Heart left ventricle (tissue), 16 donors: ENCODE measurements at regions of chr1 and their contacts with region 1.

Region 1: DNA sequence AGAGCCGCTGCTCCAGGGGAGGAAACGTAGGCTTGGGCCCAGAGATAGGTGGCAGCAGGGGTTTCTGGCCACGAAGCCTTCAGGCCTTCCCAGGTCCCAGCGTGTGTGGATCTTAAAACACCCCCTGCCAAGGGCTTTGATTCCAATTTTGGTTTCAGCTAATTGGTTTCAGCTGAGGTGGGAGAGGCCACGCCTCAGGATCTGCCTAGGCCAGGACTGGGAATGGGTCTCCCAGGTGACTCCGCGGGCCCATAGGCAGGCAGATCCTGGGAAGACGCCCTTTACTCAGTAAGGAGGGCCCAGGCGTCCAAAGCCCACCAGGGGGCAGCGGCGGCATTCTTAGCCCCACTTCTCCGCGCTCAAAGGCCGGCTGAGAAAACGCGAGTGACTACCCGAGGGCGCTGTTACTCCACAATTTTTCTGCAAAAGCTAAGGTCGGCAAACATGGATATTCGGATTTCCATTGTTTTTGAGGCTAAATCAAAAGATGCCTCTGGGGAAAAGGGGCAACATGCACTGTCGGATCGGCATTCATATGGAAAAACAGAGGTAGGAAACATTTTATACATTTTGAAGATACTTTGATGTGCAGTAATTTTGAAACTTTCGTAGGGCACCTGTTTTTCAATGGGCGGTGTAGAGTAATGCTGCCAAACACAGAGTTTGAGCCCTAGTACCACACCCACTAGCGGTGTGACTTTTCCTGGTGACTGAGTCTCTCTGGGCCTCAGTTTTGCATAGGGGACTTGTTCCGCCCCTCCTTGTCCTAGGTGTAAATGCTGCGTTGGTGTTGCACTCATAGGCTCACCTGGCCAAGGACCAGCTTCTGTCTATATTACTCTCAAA is 31.8 kb upstream of the BCL10 start:
- DNase-seq: peak; percentile 87 to 92 (median 88)
- ATAC-seq: peak; percentile 94 to 99 (median 97)
- H3K4me3 ChIP-seq: peak overlapping the region in 1 of 12 donors; percentile 3
- H3K27ac ChIP-seq: no peak overlapping the region
- H3K4me1 ChIP-seq: peaks cover 0 to 13% (median 7%) of the 10 kb centered on the region in 12 donors
- H3K27me3 ChIP-seq: peaks cover 0 to 11% (median 0%) of the 10 kb centered on the region in 9 donors
- CTCF ChIP-seq: peak; percentile 87 to 100 (median 99)
- POLR2A ChIP-seq: no peak

Region 2: DNA sequence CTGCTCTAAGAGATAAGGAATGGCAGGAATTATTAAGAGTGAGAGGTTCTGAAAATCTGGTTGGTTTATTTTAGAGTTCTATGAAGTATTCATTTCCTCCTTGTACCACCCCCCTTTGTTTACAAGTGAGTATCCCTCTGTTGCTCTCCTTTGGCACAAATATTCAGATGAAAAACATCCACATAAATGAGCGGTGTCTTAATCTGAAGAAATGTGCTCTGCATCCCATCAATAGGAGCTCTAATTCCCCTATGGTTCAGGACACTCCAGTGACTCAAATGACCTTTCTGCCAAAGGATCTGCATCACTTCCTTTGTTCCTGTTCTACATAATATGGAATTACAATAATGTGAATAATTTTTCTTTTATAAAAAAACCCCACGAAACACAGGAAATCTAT is 140.1 kb after region 1 on chr1:
- intact Hi-C with region 1: no loop called
- DNase-seq: no peak
- ATAC-seq: peak; percentile 21 to 93 (median 78)
- H3K4me3 ChIP-seq: no peak overlapping the region
- H3K27ac ChIP-seq: peak overlapping the region; percentile 3 to 78 (median 60)
- H3K4me1 ChIP-seq: peaks cover 0 to 31% (median 21%) of the 10 kb centered on the region in 12 donors
- H3K27me3 ChIP-seq: no peaks in the 10 kb centered on the region
- CTCF ChIP-seq: no peak
- POLR2A ChIP-seq: no peak

Region 3: GRCh38 chr1:85464497-85465098 is 156.4 kb after region 1 on chr1:
- intact Hi-C with region 1: loop called in 1 of 10 experiments (anchors 10 kb)
- DNase-seq: peak; percentile 76 to 83 (median 79)
- ATAC-seq: peak; percentile 45 to 87 (median 86)
- H3K4me3 ChIP-seq: peak overlapping the region; percentile 3 to 79 (median 70)
- H3K27ac ChIP-seq: peak overlapping the region; percentile 3 to 83 (median 72)
- H3K4me1 ChIP-seq: peaks cover 0 to 22% (median 11%) of the 10 kb centered on the region in 12 donors
- H3K27me3 ChIP-seq: peaks cover 0 to 30% (median 0%) of the 10 kb centered on the region in 9 donors
- CTCF ChIP-seq: no peak
- POLR2A ChIP-seq: peak in 1 of 2 donors; percentile 46

Region 4: DNA sequence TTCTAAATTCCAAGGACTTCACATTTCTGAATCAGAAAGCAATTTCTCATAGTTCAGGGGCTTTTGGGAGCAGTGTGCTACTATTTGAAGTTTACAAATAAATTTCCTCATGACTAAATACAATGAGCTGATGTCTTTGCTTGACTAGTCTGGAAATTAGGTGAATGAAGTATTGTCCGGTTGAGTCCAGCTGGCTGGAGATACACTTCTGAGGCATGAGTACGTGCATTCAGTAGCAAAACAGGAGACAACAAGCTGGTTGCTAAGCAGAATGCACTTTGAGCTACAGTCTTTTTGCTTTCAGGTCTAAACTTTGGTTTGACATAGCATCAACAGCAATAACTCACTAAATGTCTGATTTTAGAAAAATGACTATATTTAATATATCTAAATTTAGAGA is 372.9 kb after region 1 on chr1:
- intact Hi-C with region 1: loop called in 1 of 10 experiments (anchors 5 kb)
- DNase-seq: no peak
- ATAC-seq: peak; percentile 61 to 84 (median 82)
- H3K4me3 ChIP-seq: no peak overlapping the region
- H3K27ac ChIP-seq: no peak overlapping the region
- H3K4me1 ChIP-seq: peaks cover 0 to 13% (median 0%) of the 10 kb centered on the region in 12 donors
- H3K27me3 ChIP-seq: no peaks in the 10 kb centered on the region
- CTCF ChIP-seq: no peak
- POLR2A ChIP-seq: no peak

Region 5: GRCh38 chr1:85707990-85708828 is 400.0 kb after region 1 on chr1 and contains the start of gene ZNHIT6:
- intact Hi-C with region 1: loop called in 3 of 10 experiments (anchors 5 kb)
- DNase-seq: peak; percentile 89 to 95 (median 90)
- ATAC-seq: peak; percentile 95 to 98 (median 98)
- H3K4me3 ChIP-seq: peak within 1 kb of the TSS; percentile 56 to 92 (median 80)
- H3K27ac ChIP-seq: peak within 1 kb of the TSS; percentile 53 to 93 (median 86)
- H3K4me1 ChIP-seq: peaks cover 0 to 24% (median 14%) of the 10 kb centered on the region in 12 donors
- H3K27me3 ChIP-seq: no peaks in the 10 kb centered on the region
- CTCF ChIP-seq: peak in 9 of 12 donors; percentile 14 to 50 (median 32)
- POLR2A ChIP-seq: peak in 1 of 2 donors; percentile 58
- total RNA-seq, gene ZNHIT6: 7.1 to 12.8 (median 9.9) TPM

Region 6: GRCh38 chr1:86018283-86018923 is 710.2 kb after region 1 on chr1:
- intact Hi-C with region 1: loop called in 5 of 10 experiments (anchors 5 to 10 kb)
- DNase-seq: no peak
- ATAC-seq: no peak
- H3K4me3 ChIP-seq: no peak overlapping the region
- H3K27ac ChIP-seq: no peak overlapping the region
- H3K4me1 ChIP-seq: no peaks in the 10 kb centered on the region
- H3K27me3 ChIP-seq: no peaks in the 10 kb centered on the region
- CTCF ChIP-seq: peak; percentile 47 to 79 (median 64)
- POLR2A ChIP-seq: no peak